ENCODE measurements at regions of chr4 and their contacts with region 1.

Region 1: DNA sequence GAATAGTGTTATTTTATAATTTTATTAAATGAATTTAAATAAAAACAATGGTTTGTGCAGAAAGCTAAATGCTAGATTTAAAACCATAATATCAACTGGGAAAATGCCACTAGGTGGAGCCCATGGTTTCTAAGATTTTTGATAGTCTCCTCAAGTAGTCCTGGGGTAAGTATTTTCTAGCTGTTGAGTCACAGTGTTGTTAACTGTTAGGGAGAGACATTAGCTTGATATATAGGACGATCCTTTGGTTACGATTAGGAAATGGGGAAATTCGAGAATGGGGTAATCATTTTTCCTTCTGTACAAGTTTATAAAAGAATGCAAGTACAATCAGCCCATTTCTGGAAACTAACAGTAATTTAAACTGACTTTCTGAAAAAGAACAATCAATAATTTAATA is 378.4 kb downstream of the ANKRD50 start:
- DNase-seq: peak in 1 of 5 donors; percentile 26
- ATAC-seq: peak in 3 of 4 donors; percentile 52 to 75 (median 69)
- H3K4me3 ChIP-seq: no peak overlapping the region
- H3K27ac ChIP-seq: no peak overlapping the region
- H3K4me1 ChIP-seq: no peaks in the 10 kb centered on the region
- H3K27me3 ChIP-seq: no peaks in the 10 kb centered on the region
- CTCF ChIP-seq: peak; percentile 42 to 78 (median 67)
- POLR2A ChIP-seq: no peak

Region 2: DNA sequence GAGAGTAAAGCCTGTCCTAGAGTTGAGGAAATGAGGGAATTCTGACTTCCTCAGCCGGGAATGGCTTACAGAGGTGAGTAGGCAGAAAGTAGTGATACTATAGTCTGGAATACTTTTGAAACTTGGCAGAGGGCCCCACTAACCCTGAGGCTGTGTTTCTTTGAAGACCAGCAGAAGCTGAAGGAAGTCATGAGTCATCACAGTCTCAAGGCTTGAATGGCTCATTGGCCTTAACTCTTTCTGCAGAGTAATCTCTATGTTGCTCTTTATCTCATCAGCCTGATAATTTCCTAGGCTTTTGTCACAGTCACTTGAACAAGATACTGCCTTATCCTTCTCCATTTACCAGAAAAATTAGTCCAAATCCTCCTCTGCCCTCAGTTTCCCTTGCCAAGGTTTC is 297.6 kb after region 1 on chr4:
- intact Hi-C with region 1: loop called in 1 of 10 experiments (anchors 10 kb)
- DNase-seq: peak in 3 of 5 donors; percentile 56 to 73 (median 70)
- ATAC-seq: peak; percentile 67 to 97 (median 91)
- H3K4me3 ChIP-seq: no peak overlapping the region
- H3K27ac ChIP-seq: peak overlapping the region in 1 of 12 donors; percentile 27
- H3K4me1 ChIP-seq: peaks cover 0 to 7% (median 0%) of the 10 kb centered on the region in 12 donors
- H3K27me3 ChIP-seq: no peaks in the 10 kb centered on the region
- CTCF ChIP-seq: no peak
- POLR2A ChIP-seq: no peak

Region 3: DNA sequence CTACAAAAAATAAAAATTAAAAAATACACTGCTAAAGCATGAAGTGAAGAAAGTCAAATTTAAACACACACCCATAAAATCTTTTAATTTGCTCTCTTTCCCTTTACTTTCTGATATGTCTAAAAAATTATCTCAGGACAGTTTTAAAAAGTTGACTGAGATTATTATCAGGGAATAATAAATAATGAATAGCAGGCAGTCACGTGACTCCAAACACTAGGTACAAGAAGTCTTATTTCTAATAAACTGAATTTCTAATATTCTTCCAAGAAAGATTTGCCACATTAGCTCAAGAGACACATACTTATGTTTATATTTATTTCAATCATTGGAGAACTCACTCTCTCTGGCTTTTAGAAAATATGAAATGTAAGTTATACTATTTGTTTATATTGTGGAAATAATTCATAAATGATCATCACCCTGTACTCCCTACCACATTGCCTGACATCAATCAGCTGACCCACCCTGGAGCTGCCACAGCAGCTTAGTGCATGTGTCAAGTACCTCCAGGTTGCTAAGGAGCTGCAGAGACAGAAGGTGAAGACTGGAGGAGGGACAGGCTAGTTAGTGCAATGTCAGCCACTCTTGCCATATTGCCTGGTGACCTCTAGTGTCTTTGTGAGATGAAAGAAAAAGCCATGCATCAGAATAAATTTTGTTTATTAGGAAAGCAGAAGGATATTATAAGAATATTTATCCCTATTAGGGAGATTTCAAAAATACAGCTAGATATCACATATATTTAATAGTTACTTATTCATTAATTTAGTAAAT is 736.6 kb after region 1 on chr4:
- intact Hi-C with region 1: loop called in 1 of 10 experiments (anchors 10 kb)
- DNase-seq: no peak
- ATAC-seq: peak in 1 of 4 donors; percentile 24
- H3K4me3 ChIP-seq: no peak overlapping the region
- H3K27ac ChIP-seq: no peak overlapping the region
- H3K4me1 ChIP-seq: peaks cover 0 to 3% (median 0%) of the 10 kb centered on the region in 12 donors
- H3K27me3 ChIP-seq: no peaks in the 10 kb centered on the region
- CTCF ChIP-seq: peak in 1 of 12 donors; percentile 3
- POLR2A ChIP-seq: no peak

Region 4: DNA sequence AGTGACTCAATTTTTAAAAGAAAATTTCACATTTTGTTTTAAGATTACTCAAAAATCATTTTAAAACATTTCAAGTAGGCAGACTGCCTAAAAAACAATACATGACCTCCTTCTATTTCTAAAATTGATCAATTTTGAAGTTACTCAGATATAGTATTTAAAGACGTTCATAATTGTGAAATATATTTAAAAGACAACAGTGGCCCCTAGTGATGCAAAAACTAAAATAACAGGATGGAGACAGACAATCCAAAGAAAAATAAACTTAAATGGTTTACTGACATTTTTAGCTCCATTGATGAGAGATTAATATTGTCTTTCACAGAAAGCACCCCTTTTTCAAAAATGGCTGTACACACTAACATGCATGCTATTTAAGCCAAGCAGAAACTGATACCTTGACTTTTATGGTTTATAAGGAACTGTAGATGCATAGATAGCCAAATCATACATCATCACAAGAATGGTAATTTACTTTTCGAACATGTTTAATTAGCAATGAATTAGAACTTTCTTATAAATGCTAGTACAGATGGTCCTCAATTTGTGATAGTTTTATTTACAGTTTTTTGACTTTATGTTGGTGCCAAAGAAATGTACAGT is 910.8 kb after region 1 on chr4:
- intact Hi-C with region 1: loop called (anchors 1 to 5 kb)
- DNase-seq: no peak
- ATAC-seq: no peak
- H3K4me3 ChIP-seq: no peak overlapping the region
- H3K27ac ChIP-seq: no peak overlapping the region
- H3K4me1 ChIP-seq: no peaks in the 10 kb centered on the region
- H3K27me3 ChIP-seq: no peaks in the 10 kb centered on the region
- CTCF ChIP-seq: peak in 10 of 12 donors; percentile 28 to 63 (median 56)
- POLR2A ChIP-seq: no peak

Region 5: GRCh38 chr4:125283707-125284279 is 949.7 kb after region 1 on chr4:
- intact Hi-C with region 1: loop called in 9 of 10 experiments (anchors 1 to 10 kb)
- DNase-seq: no peak
- ATAC-seq: no peak
- H3K4me3 ChIP-seq: no peak overlapping the region
- H3K27ac ChIP-seq: no peak overlapping the region
- H3K4me1 ChIP-seq: no peaks in the 10 kb centered on the region
- H3K27me3 ChIP-seq: no peaks in the 10 kb centered on the region
- CTCF ChIP-seq: peak; percentile 32 to 74 (median 58)
- POLR2A ChIP-seq: no peak